ENCODE measurements at regions of chr22 and their contacts with region 1.

Region 1: GRCh38 chr22:37633625-37634416 is 5.6 kb upstream of the SH3BP1 start:
- DNase-seq: peak; percentile 40 to 74 (median 49)
- H3K4me3 ChIP-seq: peak overlapping the region in 1 of 2 donors; percentile 16
- H3K4me3 Mint-ChIP-seq: peak overlapping the region; percentile 68 to 95 (median 80)
- H3K27ac ChIP-seq: peak overlapping the region; percentile 72
- H3K27ac Mint-ChIP-seq: peak overlapping the region; percentile 91 to 99 (median 95)
- H3K4me1 ChIP-seq: peaks cover 72% of the 10 kb centered on the region
- H3K4me1 Mint-ChIP-seq: peaks cover 40 to 76% (median 60%) of the 10 kb centered on the region in 4 donors
- H3K27me3 ChIP-seq: no peaks in the 10 kb centered on the region
- H3K27me3 Mint-ChIP-seq: no peaks in the 10 kb centered on the region

Region 2: GRCh38 chr22:37623075-37624016 is 10.5 kb before region 1 on chr22:
- CTCF ChIA-PET with region 1: interaction called, 493 read pairs
- POLR2A ChIA-PET with region 1: interaction called, 247 read pairs
- intact Hi-C with region 1: loop called (anchors 1 kb)
- DNase-seq: peak; percentile 72 to 79 (median 75)
- H3K4me3 ChIP-seq: no peak overlapping the region
- H3K4me3 Mint-ChIP-seq: peak overlapping the region in 7 of 8 donors; percentile 9 to 85 (median 60)
- H3K27ac ChIP-seq: peak overlapping the region; percentile 52
- H3K27ac Mint-ChIP-seq: peak overlapping the region; percentile 92 to 97 (median 94)
- H3K4me1 ChIP-seq: peaks cover 52% of the 10 kb centered on the region
- H3K4me1 Mint-ChIP-seq: peaks cover 19 to 53% (median 37%) of the 10 kb centered on the region in 4 donors
- H3K27me3 ChIP-seq: no peaks in the 10 kb centered on the region
- H3K27me3 Mint-ChIP-seq: no peaks in the 10 kb centered on the region

Region 3: DNA sequence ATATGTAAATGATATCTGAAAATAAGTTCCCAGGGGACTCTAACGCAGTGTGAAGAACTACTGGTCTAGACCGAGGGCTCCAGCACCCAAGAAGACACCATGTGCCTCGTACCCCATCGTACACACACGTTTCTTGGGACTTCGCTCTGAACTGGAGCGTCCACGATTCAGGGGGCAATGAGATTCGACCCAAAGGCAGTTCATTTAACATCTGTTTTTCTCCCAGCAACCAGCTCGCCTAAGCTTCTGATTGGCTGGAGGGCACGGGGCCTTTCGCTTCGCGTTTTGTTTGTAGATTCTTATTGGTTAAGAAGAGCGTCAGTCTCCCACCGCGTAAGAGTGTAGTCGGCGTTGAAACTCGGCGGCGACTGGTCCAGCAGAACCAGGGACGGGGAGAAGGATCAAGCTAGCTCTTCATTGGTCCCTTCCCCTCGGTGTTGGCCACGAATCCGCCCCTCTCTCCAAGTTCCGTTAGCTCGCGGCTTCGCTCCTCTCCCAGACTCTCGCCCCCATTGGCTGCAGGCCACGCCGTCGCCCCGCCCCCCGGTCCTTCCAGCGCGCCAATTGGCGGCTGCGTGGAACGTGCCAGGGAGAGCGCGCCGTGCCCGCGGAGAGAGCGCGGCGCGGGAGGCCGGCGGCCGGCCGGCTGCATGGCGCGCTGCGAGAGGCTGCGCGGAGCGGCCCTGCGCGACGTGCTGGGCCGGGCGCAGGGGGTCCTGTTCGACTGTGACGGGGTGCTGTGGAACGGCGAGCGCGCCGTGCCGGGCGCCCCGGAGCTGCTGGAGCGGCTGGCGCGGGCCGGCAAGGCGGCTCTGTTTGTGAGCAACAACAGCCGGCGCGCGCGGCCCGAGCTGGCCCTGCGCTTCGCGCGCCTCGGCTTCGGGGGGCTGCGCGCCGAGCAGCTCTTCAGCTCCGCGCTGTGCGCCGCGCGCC is 24.6 kb after region 1 on chr22 and contains the start of gene PDXP:
- CTCF ChIA-PET with region 1: interaction called, 14 read pairs
- POLR2A ChIA-PET with region 1: interaction called, 168 read pairs
- intact Hi-C with region 1: loop called (anchors 2 kb)
- DNase-seq: peak; percentile 98
- H3K4me3 ChIP-seq: peak within 1 kb of the TSS; percentile 27 to 57
- H3K4me3 Mint-ChIP-seq: peak within 1 kb of the TSS; percentile 82 to 94 (median 86)
- H3K27ac ChIP-seq: peak within 1 kb of the TSS; percentile 63
- H3K27ac Mint-ChIP-seq: peak within 1 kb of the TSS; percentile 85 to 98 (median 93)
- H3K4me1 ChIP-seq: peaks cover 33% of the 10 kb centered on the region
- H3K4me1 Mint-ChIP-seq: peaks cover 29 to 49% (median 37%) of the 10 kb centered on the region in 4 donors
- H3K27me3 ChIP-seq: no peaks in the 10 kb centered on the region
- H3K27me3 Mint-ChIP-seq: no peaks in the 10 kb centered on the region
- total RNA-seq, gene PDXP: 7.3 to 9.8 TPM

Region 4: DNA sequence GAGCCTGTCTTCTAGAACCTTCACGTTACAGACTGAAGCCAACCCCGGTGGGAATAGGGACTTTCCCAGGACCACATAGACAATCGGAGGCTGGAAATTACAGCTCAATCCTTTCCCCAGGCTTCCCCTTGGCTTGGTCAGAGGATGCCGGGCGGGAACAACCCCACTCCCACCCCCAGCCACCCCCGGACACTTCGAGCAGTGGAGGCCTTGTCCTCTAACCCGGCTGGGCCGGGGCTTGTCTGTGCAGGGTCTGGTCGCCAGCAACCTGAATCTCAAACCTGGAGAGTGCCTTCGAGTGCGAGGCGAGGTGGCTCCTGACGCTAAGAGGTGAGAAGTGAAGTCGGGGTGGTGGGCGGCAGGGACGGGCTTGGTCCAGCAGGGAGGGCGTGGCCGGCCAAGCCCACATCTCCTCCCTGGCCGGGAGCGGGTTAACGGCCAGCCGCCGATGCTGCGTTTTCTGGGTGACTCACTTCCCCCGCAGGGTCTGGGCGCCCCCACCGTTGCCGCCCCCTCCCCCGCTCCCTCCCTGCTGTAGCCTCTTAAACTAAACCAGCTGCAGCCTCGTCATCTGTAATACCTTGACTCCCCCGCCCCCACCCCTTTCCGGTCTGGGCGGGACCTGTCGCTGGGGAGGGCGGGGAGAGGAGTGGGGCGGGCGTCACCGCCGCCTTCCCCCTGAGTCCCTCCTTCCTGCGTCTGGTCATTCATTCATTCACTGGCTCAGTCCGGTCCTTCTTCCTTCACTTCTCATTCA is 43.1 kb after region 1 on chr22:
- CTCF ChIA-PET with region 1: interaction called, 558 read pairs
- POLR2A ChIA-PET with region 1: interaction called, 185 read pairs
- intact Hi-C with region 1: loop called (anchors 1 kb)
- DNase-seq: peak; percentile 92 to 97 (median 93)
- H3K4me3 ChIP-seq: peak overlapping the region; percentile 62 to 95
- H3K4me3 Mint-ChIP-seq: peak overlapping the region; percentile 88 to 99 (median 94)
- H3K27ac ChIP-seq: peak overlapping the region; percentile 87
- H3K27ac Mint-ChIP-seq: peak overlapping the region; percentile 96 to 100 (median 100)
- H3K4me1 ChIP-seq: peaks cover 48% of the 10 kb centered on the region
- H3K4me1 Mint-ChIP-seq: peaks cover 29 to 80% (median 46%) of the 10 kb centered on the region in 4 donors
- H3K27me3 ChIP-seq: no peaks in the 10 kb centered on the region
- H3K27me3 Mint-ChIP-seq: no peaks in the 10 kb centered on the region

Region 5: DNA sequence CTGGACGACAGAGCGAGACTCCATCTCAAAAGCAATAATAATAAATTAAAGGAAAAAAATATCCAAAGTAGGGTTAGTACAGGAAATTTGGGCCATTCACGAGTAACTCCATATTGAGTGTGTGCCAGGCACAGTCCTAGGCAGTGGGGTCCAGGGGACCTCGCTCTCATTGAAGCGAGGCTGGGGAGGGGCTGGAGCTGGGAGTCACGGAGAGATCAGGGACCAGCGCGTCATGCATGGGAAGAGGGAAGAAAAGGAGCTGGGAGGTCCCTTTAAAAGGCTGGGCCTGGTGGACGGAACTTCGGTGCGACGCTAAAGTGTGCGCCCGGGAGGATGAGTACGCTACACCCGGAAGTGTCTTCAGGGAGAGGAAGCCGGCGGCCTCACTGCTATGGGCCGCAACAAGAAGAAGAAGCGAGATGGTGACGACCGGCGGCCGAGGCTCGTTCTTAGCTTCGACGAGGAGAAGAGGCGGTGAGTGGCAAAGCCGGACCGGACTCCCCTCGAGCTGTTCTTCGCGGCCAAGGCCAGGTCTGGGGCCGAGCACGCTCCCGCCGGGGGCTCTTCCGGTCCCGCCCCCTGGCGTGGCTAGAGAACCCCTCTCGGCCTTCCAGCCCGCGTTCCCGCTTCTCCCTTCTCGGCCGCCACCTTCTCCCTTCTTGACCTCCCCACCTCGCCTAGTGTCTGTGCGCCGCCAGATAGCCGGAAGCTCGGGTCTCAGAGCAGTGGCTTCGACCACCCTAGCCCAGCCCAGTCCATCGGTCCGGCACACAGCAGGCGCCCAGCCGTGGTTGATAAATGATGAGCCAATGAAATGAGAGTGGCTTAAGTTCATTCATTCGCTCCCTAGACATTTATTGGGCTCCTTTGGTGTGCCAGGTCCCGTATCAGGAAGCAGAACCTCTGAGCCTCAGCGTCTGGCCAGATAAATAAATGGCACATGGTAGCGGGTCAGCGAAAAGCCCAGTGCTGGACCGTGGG is 52.5 kb after region 1 on chr22 and contains the start of gene NOL12:
- CTCF ChIA-PET with region 1: interaction called, 558 read pairs
- POLR2A ChIA-PET with region 1: interaction called, 39 read pairs
- intact Hi-C with region 1: loop called (anchors 1 kb)
- DNase-seq: peak; percentile 76 to 82 (median 77)
- H3K4me3 ChIP-seq: peak within 1 kb of the TSS; percentile 79 to 96
- H3K4me3 Mint-ChIP-seq: peak within 1 kb of the TSS; percentile 91 to 98 (median 96)
- H3K27ac ChIP-seq: peak within 1 kb of the TSS; percentile 92
- H3K27ac Mint-ChIP-seq: peak within 1 kb of the TSS; percentile 91 to 98 (median 95)
- H3K4me1 ChIP-seq: peaks cover 25% of the 10 kb centered on the region
- H3K4me1 Mint-ChIP-seq: peaks cover 16 to 34% (median 25%) of the 10 kb centered on the region in 4 donors
- H3K27me3 ChIP-seq: no peaks in the 10 kb centered on the region
- H3K27me3 Mint-ChIP-seq: no peaks in the 10 kb centered on the region
- total RNA-seq, gene NOL12: 50.3 to 52.0 TPM

Region 6: GRCh38 chr22:37701141-37701786 is 67.4 kb after region 1 on chr22:
- CTCF ChIA-PET with region 1: no interaction called
- POLR2A ChIA-PET with region 1: no interaction called
- intact Hi-C with region 1: no loop called
- DNase-seq: no peak
- H3K4me3 ChIP-seq: no peak overlapping the region
- H3K4me3 Mint-ChIP-seq: no peak overlapping the region
- H3K27ac ChIP-seq: no peak overlapping the region
- H3K27ac Mint-ChIP-seq: no peak overlapping the region
- H3K4me1 ChIP-seq: peaks cover 5% of the 10 kb centered on the region
- H3K4me1 Mint-ChIP-seq: peaks cover 4 to 9% (median 7%) of the 10 kb centered on the region in 4 donors
- H3K27me3 ChIP-seq: no peaks in the 10 kb centered on the region
- H3K27me3 Mint-ChIP-seq: no peaks in the 10 kb centered on the region

Region 7: DNA sequence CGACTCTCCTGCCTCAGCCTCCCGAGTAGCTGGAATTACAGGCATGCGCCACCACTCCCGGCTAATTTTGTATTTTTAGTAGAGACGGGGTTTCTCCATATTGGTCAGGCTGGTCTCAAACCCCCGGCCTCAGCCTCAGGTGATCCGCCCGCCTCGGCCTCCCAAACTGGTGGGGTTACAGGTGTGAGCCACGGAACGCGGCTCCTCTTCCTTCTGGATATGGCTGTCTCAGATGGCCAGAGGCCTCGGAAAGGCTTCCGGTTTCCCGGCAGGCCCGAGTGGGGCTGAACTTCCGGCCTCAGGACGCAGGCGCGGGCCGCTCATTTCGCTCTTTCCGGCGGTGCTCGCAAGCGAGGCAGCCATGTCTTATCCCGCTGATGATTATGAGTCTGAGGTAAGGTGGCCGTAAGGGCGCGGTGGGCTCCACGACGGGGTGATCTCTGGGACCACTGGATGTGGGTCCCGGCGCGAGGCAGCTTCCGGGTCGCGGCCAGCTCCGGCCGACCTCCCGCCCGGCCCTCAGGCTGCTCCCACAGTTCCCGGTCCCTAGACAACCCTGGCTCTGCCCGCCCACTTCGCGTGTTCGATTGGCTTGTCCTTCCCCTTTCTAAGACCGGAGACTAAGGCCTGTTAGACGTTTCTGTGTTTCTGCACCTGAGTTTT is 215.4 kb after region 1 on chr22 and contains the start of gene EIF3L:
- CTCF ChIA-PET with region 1: no interaction called
- POLR2A ChIA-PET with region 1: no interaction called
- intact Hi-C with region 1: loop called (anchors 10 kb)
- DNase-seq: peak; percentile 81 to 88 (median 85)
- H3K4me3 ChIP-seq: peak within 1 kb of the TSS; percentile 61 to 94
- H3K4me3 Mint-ChIP-seq: peak within 1 kb of the TSS; percentile 83 to 98 (median 93)
- H3K27ac ChIP-seq: peak within 1 kb of the TSS; percentile 87
- H3K27ac Mint-ChIP-seq: peak within 1 kb of the TSS; percentile 91 to 99 (median 97)
- H3K4me1 ChIP-seq: peaks cover 29% of the 10 kb centered on the region
- H3K4me1 Mint-ChIP-seq: peaks cover 28 to 58% (median 43%) of the 10 kb centered on the region in 4 donors
- H3K27me3 ChIP-seq: no peaks in the 10 kb centered on the region
- H3K27me3 Mint-ChIP-seq: no peaks in the 10 kb centered on the region
- total RNA-seq, gene EIF3L: 550 to 571 TPM

Measured in CD4-positive, alpha-beta memory T cell (primary cell).